ENCODE measurements at regions of chr6 and their contacts with region 1.

Region 1: GRCh38 chr6:97064578-97064977 is 140.1 kb downstream of the KLHL32 start:
- DNase-seq: no peak
- ATAC-seq: no peak

Region 2: DNA sequence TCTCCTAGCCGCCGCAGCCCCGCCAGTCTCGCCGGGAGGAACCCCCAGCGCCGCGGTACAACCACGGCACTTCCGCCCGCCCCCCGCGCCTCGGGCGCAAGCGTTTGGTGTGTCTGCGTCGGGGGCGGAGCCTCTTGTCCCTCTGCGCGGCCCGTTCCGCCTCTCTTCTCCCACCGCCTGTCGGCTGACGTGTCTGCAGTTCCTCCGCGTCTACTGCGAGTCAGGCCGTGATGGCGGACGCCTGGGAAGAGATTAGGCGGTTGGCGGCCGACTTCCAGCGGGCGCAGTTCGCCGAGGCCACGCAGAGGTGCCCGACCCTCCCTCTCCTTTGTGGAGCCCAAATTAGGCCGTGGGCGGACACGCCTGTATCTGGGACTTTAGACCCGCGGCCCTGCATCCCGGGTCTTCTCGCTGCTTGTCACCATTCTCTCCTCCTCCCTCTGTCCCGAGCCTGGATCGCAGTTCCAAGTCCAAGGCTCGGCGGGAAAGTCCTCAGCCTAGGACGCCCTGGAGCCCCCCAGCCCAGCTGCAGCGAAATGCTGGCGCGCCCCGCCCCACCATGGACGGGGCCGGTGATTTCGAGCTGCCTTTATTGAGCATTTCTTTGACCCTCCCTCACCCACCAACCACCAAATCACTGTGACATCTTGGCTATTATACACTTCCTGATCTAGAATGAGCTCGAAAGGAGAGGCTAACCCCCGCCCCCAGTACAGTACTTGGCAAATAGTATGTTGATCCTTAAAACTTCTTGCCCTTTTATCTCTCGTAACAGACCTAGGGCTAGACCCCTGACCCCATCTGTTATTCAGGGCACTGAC is 542.7 kb before region 1 on chr6 and contains the start of gene UFL1:
- intact Hi-C with region 1: no loop called
- DNase-seq: peak; percentile 97
- ATAC-seq: peak; percentile 100
- total RNA-seq, gene UFL1: 20.5 TPM

Region 3: GRCh38 chr6:96626759-96627364 is 437.7 kb before region 1 on chr6:
- intact Hi-C with region 1: loop called (anchors 5 kb)
- DNase-seq: no peak
- ATAC-seq: peak; percentile 66

Region 4: GRCh38 chr6:96963809-96964208 is 100.8 kb before region 1 on chr6:
- intact Hi-C with region 1: no loop called
- DNase-seq: no peak
- ATAC-seq: no peak

Region 5: DNA sequence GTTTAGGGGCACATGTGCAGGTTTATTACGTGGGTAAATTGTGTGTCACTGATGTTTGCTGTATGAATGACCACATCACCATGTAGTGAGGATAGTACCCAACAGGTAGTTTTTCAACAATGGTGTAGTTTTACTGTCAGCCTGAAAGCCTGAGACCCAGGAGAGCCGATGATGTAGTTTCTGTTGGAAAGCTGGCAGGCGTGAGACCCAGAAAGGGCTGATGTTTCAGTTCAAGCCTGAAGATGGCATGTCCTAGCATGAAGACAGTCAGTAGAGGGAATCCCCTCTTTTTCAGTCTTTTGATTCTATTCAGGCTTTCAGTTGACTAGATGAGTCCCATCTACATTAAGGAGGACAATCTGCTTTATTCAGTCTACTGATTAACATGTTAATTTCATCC is 43.4 kb before region 1 on chr6:
- intact Hi-C with region 1: no loop called
- DNase-seq: no peak
- ATAC-seq: no peak

Region 6: DNA sequence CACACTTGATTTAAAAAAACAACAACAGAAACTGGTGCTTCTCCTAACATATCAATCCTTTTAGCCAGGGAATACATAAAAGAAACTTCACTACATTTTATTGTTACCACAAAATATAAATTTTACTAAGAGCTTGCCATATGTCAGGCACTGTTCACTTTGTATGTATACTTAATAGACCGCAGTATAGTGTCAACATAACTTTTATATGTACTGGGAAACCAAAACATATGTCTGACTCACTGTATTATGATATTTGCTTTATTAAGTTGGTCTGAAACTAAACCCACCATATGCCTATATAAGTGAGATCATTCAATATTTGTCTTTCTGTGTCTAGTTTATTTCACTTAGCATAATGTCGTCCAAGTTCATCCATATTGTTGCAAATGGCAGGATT is 31.6 kb before region 1 on chr6:
- intact Hi-C with region 1: no loop called
- DNase-seq: no peak
- ATAC-seq: no peak